PC-9 (cell line): ENCODE measurements at regions of chr12 and their contacts with region 1.

Region 1: GRCh38 chr12:96073346-96074330 is 38.3 kb upstream of the LTA4H start:
- DNase-seq: peak; percentile 86 to 100
- H3K4me3 ChIP-seq: peak overlapping the region; percentile 19; the same call in 1 of the 2 replicates
- H3K27ac ChIP-seq: peak overlapping the region; percentile 95
- H3K4me1 ChIP-seq: peaks cover 62% of the 10 kb centered on the region
- H3K27me3 ChIP-seq: no peaks in the 10 kb centered on the region
- CTCF ChIP-seq: 0 out of 2 replicates have a peak, but pooled peaks have one; percentile 5

Region 2: GRCh38 chr12:96061864-96062453 is 11.7 kb before region 1 on chr12:
- CTCF ChIA-PET with region 1: no interaction called
- POLR2A ChIA-PET with region 1: no interaction called
- intact Hi-C with region 1: no loop called
- DNase-seq: peak; percentile 69 to 72
- H3K4me3 ChIP-seq: no peak overlapping the region
- H3K27ac ChIP-seq: 0 out of 2 replicates have a peak overlapping the region, but pooled peaks have one; percentile 14
- H3K4me1 ChIP-seq: peaks cover 9% of the 10 kb centered on the region; the same call in 1 of the 2 replicates
- H3K27me3 ChIP-seq: no peaks in the 10 kb centered on the region
- CTCF ChIP-seq: peak; percentile 89

Region 3: DNA sequence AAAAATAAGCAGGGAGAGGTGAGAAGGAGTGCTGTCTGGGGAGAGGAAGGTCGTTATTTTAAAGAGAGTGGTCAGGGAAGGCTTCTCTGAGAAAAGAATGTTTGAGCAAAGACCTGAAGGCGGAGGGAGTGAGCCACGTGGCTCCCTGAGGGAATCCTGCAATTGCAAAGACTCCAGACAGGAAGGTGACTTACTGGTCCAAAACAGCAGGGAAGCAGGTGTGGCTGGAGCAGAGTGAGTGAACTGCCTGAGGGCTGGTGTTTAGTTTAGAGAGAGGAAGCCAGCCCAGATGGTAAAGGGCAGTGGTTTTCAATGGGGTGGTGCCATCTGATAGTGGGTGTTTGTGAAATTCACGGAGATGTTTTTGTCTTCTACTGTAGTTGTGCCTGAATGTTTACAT is 20.6 kb after region 1 on chr12:
- CTCF ChIA-PET with region 1: no interaction called
- POLR2A ChIA-PET with region 1: no interaction called
- intact Hi-C with region 1: loop called (anchors 1 kb)
- DNase-seq: peak; percentile 82 to 96
- H3K4me3 ChIP-seq: peak overlapping the region; percentile 22; the same call in 1 of the 2 replicates
- H3K27ac ChIP-seq: peak overlapping the region; percentile 97
- H3K4me1 ChIP-seq: peaks cover 46% of the 10 kb centered on the region
- H3K27me3 ChIP-seq: no peaks in the 10 kb centered on the region
- CTCF ChIP-seq: no peak

Region 4: DNA sequence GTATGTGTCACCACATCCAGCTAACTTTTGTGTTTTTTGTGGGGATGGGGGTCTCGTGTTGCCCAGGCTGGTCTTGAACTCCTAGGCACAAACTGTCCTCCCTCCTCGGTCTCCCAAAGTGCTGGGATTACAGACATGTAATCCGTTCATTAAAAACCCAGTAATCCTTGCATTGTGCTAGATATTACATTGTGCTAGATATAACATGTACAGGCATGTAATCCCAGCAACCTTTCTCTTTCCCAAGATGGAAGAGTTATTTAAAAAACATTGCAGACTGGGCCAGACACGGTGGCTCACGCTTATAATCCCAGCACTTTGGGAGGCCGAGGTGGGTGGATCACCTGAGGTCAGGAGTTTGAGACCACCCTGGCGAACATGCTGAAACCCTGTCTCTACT is 140.2 kb after region 1 on chr12:
- CTCF ChIA-PET with region 1: interaction called, 16 read pairs
- POLR2A ChIA-PET with region 1: no interaction called
- intact Hi-C with region 1: loop called (anchors 1 kb)
- DNase-seq: no peak
- H3K4me3 ChIP-seq: no peak overlapping the region
- H3K27ac ChIP-seq: peak overlapping the region; percentile 37
- H3K4me1 ChIP-seq: peaks cover 34% of the 10 kb centered on the region
- H3K27me3 ChIP-seq: no peaks in the 10 kb centered on the region
- CTCF ChIP-seq: no peak